Prostate gland (tissue), 2 donors: ENCODE measurements at regions of chr9 and their contacts with region 1.

Region 1: GRCh38 chr9:120842690-120843499 is at the start of gene PSMD5:
- DNase-seq: peak; percentile 97
- H3K4me3 ChIP-seq: peak within 1 kb of the TSS; percentile 65 to 66
- H3K27ac ChIP-seq: peak within 1 kb of the TSS; percentile 93 to 95
- H3K4me1 ChIP-seq: no peaks in the 10 kb centered on the region
- H3K27me3 ChIP-seq: no peaks in the 10 kb centered on the region
- CTCF ChIP-seq: peak in 2 of 4 experiments; percentile 13 to 32
- POLR2A ChIP-seq: peak; percentile 83
- total RNA-seq, gene PSMD5: 30.0 to 36.3 TPM

Region 2: DNA sequence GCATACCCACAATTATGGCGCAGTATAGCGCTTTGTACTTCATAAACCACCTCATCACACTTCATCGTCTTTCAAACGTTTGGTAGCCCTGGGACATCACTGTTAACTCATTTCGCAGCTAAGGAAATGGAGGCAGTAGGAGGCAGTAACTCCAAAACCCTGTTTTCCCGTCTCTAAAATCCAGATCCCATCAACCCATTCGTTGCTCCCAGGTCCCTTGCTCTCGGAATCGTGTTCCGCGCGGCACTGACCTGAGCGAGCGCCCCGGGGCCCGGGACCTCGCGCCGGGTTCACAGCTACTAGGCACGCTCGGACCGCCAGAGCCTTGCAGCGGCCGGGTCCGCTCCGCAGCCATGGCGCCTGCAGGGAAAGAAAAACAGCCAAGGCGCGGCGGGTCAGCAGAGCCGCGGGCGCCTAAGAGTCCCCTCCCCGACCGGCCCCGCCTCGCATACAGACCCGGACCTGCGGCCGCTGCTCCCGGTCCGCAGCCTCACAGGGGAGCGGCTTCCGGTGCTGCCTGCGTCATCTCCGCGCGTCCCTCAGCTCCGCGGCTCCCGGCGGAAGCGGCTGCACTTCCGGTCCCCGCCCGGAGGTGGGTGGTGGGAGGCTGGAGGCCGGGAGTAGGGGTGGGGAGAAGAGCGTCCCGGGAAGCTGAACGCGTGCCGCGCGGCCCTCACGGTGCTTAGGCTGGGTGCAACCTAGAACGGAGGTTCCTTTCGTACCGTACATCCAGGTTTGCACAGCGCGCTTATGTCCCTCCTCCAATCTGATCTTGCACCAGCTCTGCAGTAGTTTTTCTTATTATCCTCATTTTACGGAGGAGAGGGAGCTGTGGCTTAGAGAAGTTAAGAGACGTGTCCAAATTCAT is 49.8 kb before region 1 on chr9 and contains the start of gene FBXW2:
- intact Hi-C with region 1: loop called (anchors 10 kb)
- DNase-seq: peak; percentile 89
- H3K4me3 ChIP-seq: peak within 1 kb of the TSS; percentile 73 to 97
- H3K27ac ChIP-seq: peak within 1 kb of the TSS; percentile 79 to 88
- H3K4me1 ChIP-seq: no peaks in the 10 kb centered on the region
- H3K27me3 ChIP-seq: no peaks in the 10 kb centered on the region
- CTCF ChIP-seq: peak in 2 of 4 experiments; percentile 40 to 47
- POLR2A ChIP-seq: peak; percentile 81
- total RNA-seq, gene FBXW2: 38.3 to 57.1 TPM

Region 3: GRCh38 chr9:120928483-120929228 is 85.8 kb after region 1 on chr9:
- intact Hi-C with region 1: no loop called
- DNase-seq: peak; percentile 65
- H3K4me3 ChIP-seq: peak overlapping the region; percentile 67 to 85
- H3K27ac ChIP-seq: peak overlapping the region; percentile 83 to 89
- H3K4me1 ChIP-seq: no peaks in the 10 kb centered on the region
- H3K27me3 ChIP-seq: no peaks in the 10 kb centered on the region
- CTCF ChIP-seq: peak in 1 of 4 experiments; percentile 39
- POLR2A ChIP-seq: no peak